ENCODE measurements at regions of chr16 and their contacts with region 1.

Region 1: DNA sequence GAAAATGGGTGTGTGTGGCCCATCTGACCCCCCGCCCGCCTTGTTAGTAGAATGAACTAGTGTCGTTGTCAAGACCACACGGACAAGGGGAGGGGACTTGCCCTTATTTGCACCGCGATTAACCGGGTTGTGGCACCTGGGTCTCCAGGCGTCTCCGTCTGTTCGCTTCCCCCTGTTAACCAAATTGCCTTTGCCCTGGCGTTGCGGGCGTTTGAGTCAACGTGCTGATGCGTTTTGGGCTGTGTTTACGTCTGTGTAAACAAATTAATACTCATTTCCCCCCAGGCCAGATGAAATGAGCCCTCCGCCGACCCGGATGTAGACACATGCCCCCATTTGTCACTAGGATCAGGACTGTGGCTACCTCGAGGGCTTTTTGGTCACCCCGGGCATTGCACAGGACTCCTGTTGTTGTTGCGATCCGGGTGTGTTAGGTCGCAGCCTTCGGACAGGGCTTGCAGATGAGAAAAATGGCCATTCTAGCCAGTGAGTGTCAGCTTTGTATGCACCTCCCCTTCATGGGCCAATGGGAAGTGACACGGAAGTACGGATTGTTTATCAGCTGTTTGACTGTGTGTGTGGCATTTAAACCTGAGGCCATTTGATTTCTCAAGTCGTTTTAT is 906 bp downstream of the RBL2 start:
- DNase-seq: peak; percentile 81
- ATAC-seq: peak; percentile 87
- H3K4me3 ChIP-seq: peak overlapping the region; percentile 90 to 95
- H3K27ac ChIP-seq: peak overlapping the region; percentile 79
- H3K4me1 ChIP-seq: peaks cover 10 to 11% of the 10 kb centered on the region in 2 experiments; a peak in 3 of 4 replicates
- H3K27me3 ChIP-seq: no peaks in the 10 kb centered on the region
- CTCF ChIP-seq: no peak
- POLR2A ChIP-seq: no peak
- RAD21 ChIP-seq: no peak

Region 2: DNA sequence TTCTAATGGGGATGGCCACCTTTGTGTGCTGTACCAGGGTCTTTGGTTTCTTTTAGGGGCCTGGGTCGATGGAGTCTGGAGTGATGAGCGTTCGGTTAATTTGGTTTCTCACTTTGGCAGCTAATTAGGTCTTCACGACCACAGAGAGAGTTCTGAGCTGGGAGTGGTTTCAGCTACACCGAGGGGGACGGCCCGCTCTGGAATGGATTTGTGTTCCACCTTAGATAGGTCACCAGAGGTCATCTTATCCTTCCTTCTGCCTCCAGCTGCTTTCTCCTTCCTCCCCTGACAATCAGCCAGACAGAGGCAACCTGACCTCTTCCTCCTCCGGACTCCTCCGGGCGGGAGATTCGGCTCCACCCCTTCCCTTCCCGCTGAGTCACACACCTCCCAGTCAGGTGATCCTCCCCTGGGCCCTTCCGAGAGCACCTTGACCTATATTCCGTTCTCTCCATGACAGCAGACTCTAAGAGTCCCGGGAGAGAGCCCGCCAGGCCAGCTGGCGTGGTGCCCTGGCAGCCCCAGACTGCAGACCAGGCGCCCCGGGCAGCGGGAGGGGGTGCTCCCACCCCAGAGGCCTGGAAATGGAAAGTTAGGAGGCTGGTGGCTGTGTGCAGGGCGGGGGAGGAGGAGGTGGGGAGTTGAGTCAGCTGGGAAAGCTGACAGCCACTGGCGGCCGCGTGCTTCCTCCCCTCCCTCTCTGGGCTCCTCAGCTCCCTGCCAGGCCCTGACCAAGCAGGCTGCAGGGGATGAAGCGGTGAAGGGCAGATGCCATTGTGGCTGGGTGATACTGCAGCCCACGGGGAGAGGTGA is 335.7 kb before region 1 on chr16:
- CTCF ChIA-PET with region 1: no interaction called
- POLR2A ChIA-PET with region 1: no interaction called
- RAD21 ChIA-PET with region 1: no interaction called
- intact Hi-C with region 1: no loop called
- DNase-seq: peak; percentile 78
- ATAC-seq: peak; percentile 96
- H3K4me3 ChIP-seq: peak overlapping the region; percentile 41 to 56
- H3K27ac ChIP-seq: peak overlapping the region; percentile 83
- H3K4me1 ChIP-seq: peaks cover 26 to 33% of the 10 kb centered on the region in 2 experiments
- H3K27me3 ChIP-seq: no peaks in the 10 kb centered on the region
- CTCF ChIP-seq: no peak
- POLR2A ChIP-seq: no peak
- RAD21 ChIP-seq: no peak

Region 3: GRCh38 chr16:53503270-53503923 is 68.2 kb after region 1 on chr16:
- CTCF ChIA-PET with region 1: no interaction called
- POLR2A ChIA-PET with region 1: no interaction called
- RAD21 ChIA-PET with region 1: interaction called in 1 of 2 experiments, 3 read pairs
- intact Hi-C with region 1: loop called (anchors 2 kb)
- DNase-seq: peak; percentile 100
- ATAC-seq: peak; percentile 94
- H3K4me3 ChIP-seq: peak overlapping the region; percentile 72 to 79
- H3K27ac ChIP-seq: peak overlapping the region; percentile 70
- H3K4me1 ChIP-seq: peaks cover 15 to 24% of the 10 kb centered on the region in 2 experiments; a peak in 3 of 4 replicates
- H3K27me3 ChIP-seq: no peaks in the 10 kb centered on the region
- CTCF ChIP-seq: no peak
- POLR2A ChIP-seq: no peak
- RAD21 ChIP-seq: no peak